ENCODE measurements at regions of chr2 and their contacts with region 1.

Region 1: GRCh38 chr2:230798769-230799399 is 65.9 kb upstream of the ITM2C start:
- DNase-seq: peak; percentile 30
- H3K27ac ChIP-seq: no peak overlapping the region
- CTCF ChIP-seq: peak; percentile 68

Region 2: DNA sequence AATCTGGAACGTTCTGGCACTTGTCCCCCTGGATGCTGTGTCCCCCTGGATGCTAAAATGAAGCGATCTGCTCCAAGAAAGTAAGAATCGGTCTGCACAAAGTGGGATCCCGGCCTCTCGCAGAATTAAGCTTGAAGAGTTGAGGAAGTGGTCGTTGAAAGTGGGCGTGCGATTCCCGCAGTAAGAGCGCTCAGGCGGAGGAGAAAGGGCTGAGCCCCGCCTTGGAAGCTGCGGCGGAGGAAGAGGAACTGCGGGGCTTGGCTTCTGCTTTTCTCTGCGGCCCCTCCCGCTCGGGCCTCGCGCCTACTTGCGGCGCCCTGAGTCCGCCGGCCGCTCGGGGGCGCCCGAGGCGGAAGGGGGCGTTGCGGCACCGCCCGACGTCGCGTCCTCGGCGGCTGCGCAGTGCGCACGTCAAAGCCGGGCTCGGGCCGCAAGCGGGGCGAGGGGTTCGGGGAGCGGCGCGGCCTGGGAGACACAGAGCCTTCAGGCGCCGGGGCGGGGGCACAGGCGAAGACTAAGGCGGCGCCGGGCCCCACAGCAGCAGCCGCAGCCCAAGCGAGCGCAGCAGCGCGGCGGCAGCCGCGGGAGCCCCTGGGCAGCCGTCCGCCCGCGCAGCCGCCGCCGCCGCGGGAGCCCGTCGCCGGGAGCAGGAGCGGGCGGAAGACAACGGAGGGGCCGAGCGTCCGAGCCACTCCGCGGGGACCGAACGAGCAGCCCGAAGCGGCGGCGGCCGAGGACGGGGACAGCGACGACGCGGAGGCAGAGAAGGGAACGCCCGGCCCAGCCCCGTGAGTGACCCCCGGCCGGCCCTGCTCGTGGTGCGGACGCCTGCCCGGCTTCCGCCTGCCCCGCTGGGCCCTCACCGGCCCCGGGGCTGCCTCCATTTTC is 86.2 kb before region 1 on chr2 and contains the start of gene CAB39:
- CTCF ChIA-PET with region 1: interaction called, 14 read pairs
- POLR2A ChIA-PET with region 1: no interaction called
- DNase-seq: peak; percentile 86
- H3K27ac ChIP-seq: peak within 1 kb of the TSS; percentile 92
- CTCF ChIP-seq: peak; percentile 95

Region 3: DNA sequence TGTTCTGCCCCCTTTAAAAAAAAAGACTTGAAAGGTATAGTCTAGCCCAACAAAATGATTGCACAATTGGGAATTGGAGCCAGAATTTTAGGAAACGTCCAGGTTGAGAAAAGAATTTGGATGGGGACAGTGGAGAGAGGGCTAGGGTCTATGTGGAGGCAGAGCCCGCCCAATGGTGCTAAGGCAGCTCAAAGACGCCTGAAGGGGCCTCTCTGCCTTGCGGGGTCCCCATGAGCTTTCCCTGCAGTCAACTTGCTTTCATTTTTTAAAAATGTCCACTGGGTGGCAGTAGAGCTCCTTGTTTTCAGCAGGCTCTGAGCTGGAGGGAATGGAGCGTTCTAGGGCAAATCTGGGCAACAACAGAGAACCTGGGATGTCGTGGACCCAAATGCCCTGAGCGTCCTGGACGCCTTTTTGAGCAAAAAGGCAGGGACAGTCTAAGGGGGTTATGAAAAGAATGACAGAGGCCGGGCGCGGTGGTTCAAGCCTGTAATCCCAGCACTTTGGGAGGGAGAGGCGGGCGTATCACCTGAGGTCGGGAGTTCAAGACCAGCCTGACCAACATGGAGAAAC is 25.6 kb after region 1 on chr2:
- CTCF ChIA-PET with region 1: no interaction called
- POLR2A ChIA-PET with region 1: no interaction called
- DNase-seq: peak; percentile 59
- H3K27ac ChIP-seq: no peak overlapping the region
- CTCF ChIP-seq: peak; percentile 75

Measured in RWPE1 (cell line).